OCI-LY7 (cell line): ENCODE measurements at regions of chr11 and their contacts with region 1.

Region 1: DNA sequence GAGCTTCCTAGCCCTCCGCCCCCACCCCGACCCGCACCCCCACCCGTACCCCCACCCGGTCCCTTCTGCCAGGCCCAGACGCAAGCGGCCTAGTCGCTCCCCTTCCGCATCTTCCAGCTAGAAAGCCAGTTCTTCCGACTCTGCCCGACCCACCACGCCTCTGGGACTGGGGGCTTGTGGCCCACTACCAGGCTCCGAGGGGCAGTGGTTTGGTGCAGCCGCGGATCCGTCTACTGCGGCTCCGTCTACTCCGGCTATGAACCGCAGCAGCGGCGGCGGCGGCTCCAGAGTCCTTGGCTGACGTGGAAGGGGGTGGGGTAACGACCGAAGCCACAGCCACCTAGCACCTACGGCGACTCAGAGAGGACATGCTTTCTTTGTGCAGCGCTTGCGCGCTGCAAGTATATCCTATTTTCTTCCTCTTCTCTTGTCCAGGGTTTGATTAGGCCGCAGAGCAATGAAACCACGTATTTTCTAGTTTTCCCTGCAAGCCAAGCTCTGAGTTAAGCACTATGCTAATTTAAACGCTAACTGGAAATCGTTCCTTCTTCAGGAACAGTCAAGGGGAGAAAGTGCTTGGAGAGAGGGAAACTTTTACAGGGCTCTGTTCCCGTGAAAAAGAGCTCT is at the start of gene COPB1:
- DNase-seq: peak; percentile 94
- H3K4me3 ChIP-seq: peak within 1 kb of the TSS; percentile 100
- H3K27ac ChIP-seq: peak within 1 kb of the TSS; percentile 74
- H3K4me1 ChIP-seq: peaks cover 19% of the 10 kb centered on the region
- CTCF ChIP-seq: no peak
- total RNA-seq, gene COPB1: 61.1 and 81.7 TPM in 2 replicates

Region 2: GRCh38 chr11:14463623-14464022 is 36.0 kb before region 1 on chr11:
- CTCF ChIA-PET with region 1: no interaction called
- POLR2A ChIA-PET with region 1: interaction called, 3 read pairs
- intact Hi-C with region 1: loop called (anchors 5 kb)
- DNase-seq: no peak
- H3K4me3 ChIP-seq: no peak overlapping the region
- H3K27ac ChIP-seq: no peak overlapping the region
- H3K4me1 ChIP-seq: no peaks in the 10 kb centered on the region
- CTCF ChIP-seq: no peak

Region 3: DNA sequence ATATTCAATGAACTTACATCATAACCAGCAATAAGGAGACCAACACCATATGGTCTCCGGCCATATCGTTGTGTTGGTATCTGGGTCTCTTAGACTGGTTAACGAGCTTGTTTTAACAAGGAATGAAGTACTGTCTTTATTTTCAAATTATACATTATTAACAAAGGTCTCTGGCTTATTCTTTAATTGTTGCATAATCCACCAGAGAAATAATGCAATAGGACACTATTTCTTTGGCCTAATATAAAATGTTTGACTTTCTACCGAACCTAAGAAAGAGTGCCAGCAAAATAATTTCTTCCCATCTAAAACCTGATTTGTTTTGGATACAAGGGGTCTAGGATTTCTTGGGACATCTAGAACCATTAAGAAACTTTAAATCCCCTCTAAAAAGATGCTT is 14.1 kb after region 1 on chr11:
- CTCF ChIA-PET with region 1: no interaction called
- POLR2A ChIA-PET with region 1: interaction called, 16 read pairs
- intact Hi-C with region 1: no loop called
- DNase-seq: no peak
- H3K4me3 ChIP-seq: no peak overlapping the region
- H3K27ac ChIP-seq: no peak overlapping the region
- H3K4me1 ChIP-seq: peaks cover 9% of the 10 kb centered on the region
- CTCF ChIP-seq: no peak

Region 4: GRCh38 chr11:14593684-14594083 is 94.0 kb after region 1 on chr11:
- CTCF ChIA-PET with region 1: no interaction called
- POLR2A ChIA-PET with region 1: no interaction called
- intact Hi-C with region 1: no loop called
- DNase-seq: no peak
- H3K4me3 ChIP-seq: no peak overlapping the region
- H3K27ac ChIP-seq: no peak overlapping the region
- H3K4me1 ChIP-seq: no peaks in the 10 kb centered on the region
- CTCF ChIP-seq: no peak